MCF 10A (cell line): ENCODE measurements at regions of chr6 and their contacts with region 1.

Region 1: GRCh38 chr6:97394160-97394748 is 111.2 kb upstream of the MMS22L start:
- DNase-seq: peak; percentile 74
- H3K4me3 Mint-ChIP-seq: no peak overlapping the region
- H3K27ac Mint-ChIP-seq: no peak overlapping the region
- H3K4me1 Mint-ChIP-seq: no peaks in the 10 kb centered on the region
- H3K27me3 Mint-ChIP-seq: peaks cover 52% of the 10 kb centered on the region
- CTCF ChIP-seq: peak; percentile 84

Region 2: DNA sequence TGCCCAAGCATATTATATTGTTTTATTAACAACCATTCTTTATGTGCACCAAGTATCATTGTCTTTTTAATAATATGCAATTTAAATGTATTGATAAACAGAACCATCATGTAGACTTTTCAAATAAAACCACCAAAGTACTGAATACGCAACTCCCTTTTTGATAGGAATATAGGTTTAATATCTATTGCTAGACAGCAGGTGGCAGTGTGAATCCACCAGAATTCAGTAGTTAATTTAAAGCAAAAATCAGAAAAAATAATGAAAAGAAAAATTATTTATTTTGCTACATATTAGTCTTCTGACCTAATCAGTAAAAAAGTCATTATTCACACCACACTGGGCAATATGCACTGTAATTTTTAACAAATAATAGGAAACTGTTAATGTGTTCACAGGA is 326.0 kb before region 1 on chr6:
- CTCF ChIA-PET with region 1: interaction called, 3 read pairs
- POLR2A ChIA-PET with region 1: no interaction called
- intact Hi-C with region 1: loop called (anchors 1 kb)
- DNase-seq: peak; percentile 11
- H3K4me3 Mint-ChIP-seq: no peak overlapping the region
- H3K27ac Mint-ChIP-seq: no peak overlapping the region
- H3K4me1 Mint-ChIP-seq: no peaks in the 10 kb centered on the region
- H3K27me3 Mint-ChIP-seq: peaks cover 41% of the 10 kb centered on the region
- CTCF ChIP-seq: peak; percentile 59

Region 3: DNA sequence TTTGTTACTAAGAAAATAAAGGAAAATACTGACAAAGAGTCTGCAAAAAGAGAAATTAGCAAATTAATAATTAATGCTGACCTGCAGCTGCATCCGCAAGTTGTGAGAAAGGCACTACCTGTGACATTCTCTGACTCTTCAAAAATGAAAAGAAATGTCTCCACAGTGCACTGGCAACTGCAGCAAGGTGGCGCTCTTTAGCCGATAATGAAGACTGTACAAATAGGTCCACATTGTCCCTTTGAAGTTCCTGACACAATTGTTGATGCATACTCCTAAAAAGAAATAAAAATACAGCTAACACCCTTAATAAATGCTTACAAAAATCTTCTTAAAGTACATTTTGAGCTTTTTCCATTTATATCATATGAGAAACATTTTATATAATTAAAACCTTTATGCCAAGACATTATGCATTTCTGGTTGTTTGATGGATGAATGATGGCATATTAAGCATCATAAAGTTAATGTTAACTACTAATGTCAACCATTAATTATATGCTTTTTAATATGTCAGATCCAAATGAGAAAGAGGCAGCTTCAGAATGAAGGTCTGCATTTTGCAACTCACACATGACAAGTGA is 207.7 kb before region 1 on chr6:
- CTCF ChIA-PET with region 1: interaction called, 27 read pairs
- POLR2A ChIA-PET with region 1: interaction called, 3 read pairs
- intact Hi-C with region 1: loop called (anchors 1 kb)
- DNase-seq: peak; percentile 78
- H3K4me3 Mint-ChIP-seq: no peak overlapping the region
- H3K27ac Mint-ChIP-seq: no peak overlapping the region
- H3K4me1 Mint-ChIP-seq: peaks cover 6% of the 10 kb centered on the region
- H3K27me3 Mint-ChIP-seq: no peaks in the 10 kb centered on the region
- CTCF ChIP-seq: peak; percentile 77

Region 4: GRCh38 chr6:97203343-97203742 is 190.9 kb before region 1 on chr6:
- CTCF ChIA-PET with region 1: interaction called, 11 read pairs
- POLR2A ChIA-PET with region 1: no interaction called
- intact Hi-C with region 1: no loop called
- DNase-seq: no peak
- H3K4me3 Mint-ChIP-seq: no peak overlapping the region
- H3K27ac Mint-ChIP-seq: no peak overlapping the region
- H3K4me1 Mint-ChIP-seq: no peaks in the 10 kb centered on the region
- H3K27me3 Mint-ChIP-seq: no peaks in the 10 kb centered on the region
- CTCF ChIP-seq: no peak